Activated CD4-positive, alpha-beta memory T cell treated with anti-CD3 and anti-CD28 coated beads for 36 hours (primary cell): ENCODE measurements at regions of chrX and their contacts with region 1.

Region 1: GRCh38 chrX:39859991-39860861 is 237.5 kb downstream of the BCOR start:
- DNase-seq: peak; percentile 94
- H3K4me3 Mint-ChIP-seq: peak overlapping the region; percentile 29
- H3K27ac Mint-ChIP-seq: peak overlapping the region; percentile 98
- H3K4me1 Mint-ChIP-seq: peaks cover 55% of the 10 kb centered on the region
- H3K27me3 Mint-ChIP-seq: no peaks in the 10 kb centered on the region

Region 2: DNA sequence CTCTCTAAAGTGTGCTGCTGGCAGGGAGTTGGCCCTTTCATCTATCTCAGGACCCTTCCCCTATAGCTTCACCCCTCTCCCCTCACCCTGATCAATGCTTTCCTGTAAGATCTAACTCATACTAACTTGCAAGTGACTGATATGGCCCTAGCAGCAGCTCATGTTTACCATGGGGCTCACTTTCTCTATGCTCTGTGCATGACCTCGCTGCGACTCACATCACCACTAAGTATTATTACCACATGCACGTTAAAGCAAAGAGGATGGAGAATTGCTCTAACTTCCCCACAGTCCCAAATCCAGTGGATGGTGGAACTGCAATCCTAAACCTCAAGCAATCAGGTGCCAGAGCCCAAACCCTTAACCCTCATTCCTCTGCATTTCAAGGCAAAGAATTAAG is 432.3 kb before region 1 on chrX:
- CTCF ChIA-PET with region 1: no interaction called
- POLR2A ChIA-PET with region 1: no interaction called
- intact Hi-C with region 1: loop called (anchors 10 kb)
- DNase-seq: peak; percentile 78
- H3K4me3 Mint-ChIP-seq: no peak overlapping the region
- H3K27ac Mint-ChIP-seq: peak overlapping the region; percentile 90
- H3K4me1 Mint-ChIP-seq: peaks cover 56% of the 10 kb centered on the region
- H3K27me3 Mint-ChIP-seq: no peaks in the 10 kb centered on the region

Region 3: DNA sequence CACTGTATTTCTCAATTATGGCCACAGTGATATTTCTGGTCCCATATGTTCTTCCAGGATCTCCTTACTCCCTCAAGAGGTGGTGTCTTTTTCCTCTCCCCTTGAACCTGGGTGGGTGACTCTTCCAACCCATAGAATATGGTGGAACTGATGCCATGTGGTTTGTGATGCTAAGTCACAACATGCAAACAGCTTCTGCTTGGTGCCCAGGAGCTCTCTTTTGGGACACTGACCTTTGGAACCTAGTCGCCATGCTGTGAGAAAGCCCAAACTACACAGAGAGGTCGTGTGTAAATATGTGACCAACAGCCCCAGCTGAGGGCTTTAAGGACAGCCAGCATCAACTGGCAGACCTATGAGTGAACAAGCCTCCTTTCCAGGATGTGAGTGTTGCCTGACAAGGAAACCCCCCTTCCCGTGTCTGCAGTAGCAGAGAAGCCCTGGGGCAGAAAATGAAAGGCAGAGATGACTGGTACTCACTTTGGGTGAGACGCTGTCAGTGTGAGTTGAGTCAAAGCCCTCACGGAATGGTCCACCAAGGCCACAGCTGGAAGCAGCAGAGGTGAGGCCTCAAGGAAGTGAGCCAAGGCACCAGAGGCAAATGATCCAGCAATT is 14.1 kb after region 1 on chrX:
- CTCF ChIA-PET with region 1: interaction called, 6 read pairs
- POLR2A ChIA-PET with region 1: interaction called, 22 read pairs
- intact Hi-C with region 1: loop called (anchors 1 kb)
- DNase-seq: peak; percentile 88
- H3K4me3 Mint-ChIP-seq: no peak overlapping the region
- H3K27ac Mint-ChIP-seq: peak overlapping the region; percentile 93
- H3K4me1 Mint-ChIP-seq: peaks cover 51% of the 10 kb centered on the region
- H3K27me3 Mint-ChIP-seq: peaks cover 4% of the 10 kb centered on the region

Region 4: GRCh38 chrX:39896951-39897740 is 36.9 kb after region 1 on chrX:
- CTCF ChIA-PET with region 1: no interaction called
- POLR2A ChIA-PET with region 1: no interaction called
- intact Hi-C with region 1: loop called (anchors 5 kb)
- DNase-seq: no peak
- H3K4me3 Mint-ChIP-seq: no peak overlapping the region
- H3K27ac Mint-ChIP-seq: no peak overlapping the region
- H3K4me1 Mint-ChIP-seq: no peaks in the 10 kb centered on the region
- H3K27me3 Mint-ChIP-seq: peaks cover 2% of the 10 kb centered on the region

Region 5: GRCh38 chrX:39953883-39954282 is 93.7 kb after region 1 on chrX:
- CTCF ChIA-PET with region 1: no interaction called
- POLR2A ChIA-PET with region 1: no interaction called
- intact Hi-C with region 1: no loop called
- DNase-seq: no peak
- H3K4me3 Mint-ChIP-seq: no peak overlapping the region
- H3K27ac Mint-ChIP-seq: no peak overlapping the region
- H3K4me1 Mint-ChIP-seq: peaks cover 6% of the 10 kb centered on the region
- H3K27me3 Mint-ChIP-seq: no peaks in the 10 kb centered on the region

Region 6: DNA sequence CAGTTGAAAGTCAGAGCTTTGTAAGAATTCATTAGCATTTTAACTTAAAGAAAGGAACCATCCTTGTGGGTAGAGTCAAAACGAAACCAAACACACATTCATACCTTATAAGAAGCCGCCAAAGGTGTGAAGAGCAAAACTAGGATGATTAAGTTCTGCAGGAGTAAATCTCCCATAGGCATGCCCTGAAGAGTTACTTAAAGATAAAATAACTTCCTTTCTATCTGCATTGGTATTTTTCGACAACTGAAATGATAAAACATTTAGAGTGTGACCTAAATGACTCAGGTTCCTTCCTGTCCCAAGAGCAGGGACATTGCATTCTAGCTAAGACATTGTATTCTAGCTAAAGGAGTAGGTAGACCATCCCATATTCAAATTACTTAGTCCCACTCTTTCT is 162.2 kb after region 1 on chrX:
- CTCF ChIA-PET with region 1: interaction called, 4 read pairs
- POLR2A ChIA-PET with region 1: interaction called, 10 read pairs
- intact Hi-C with region 1: no loop called
- DNase-seq: no peak
- H3K4me3 Mint-ChIP-seq: no peak overlapping the region
- H3K27ac Mint-ChIP-seq: peak overlapping the region; percentile 51
- H3K4me1 Mint-ChIP-seq: peaks cover 13% of the 10 kb centered on the region
- H3K27me3 Mint-ChIP-seq: no peaks in the 10 kb centered on the region

Region 7: DNA sequence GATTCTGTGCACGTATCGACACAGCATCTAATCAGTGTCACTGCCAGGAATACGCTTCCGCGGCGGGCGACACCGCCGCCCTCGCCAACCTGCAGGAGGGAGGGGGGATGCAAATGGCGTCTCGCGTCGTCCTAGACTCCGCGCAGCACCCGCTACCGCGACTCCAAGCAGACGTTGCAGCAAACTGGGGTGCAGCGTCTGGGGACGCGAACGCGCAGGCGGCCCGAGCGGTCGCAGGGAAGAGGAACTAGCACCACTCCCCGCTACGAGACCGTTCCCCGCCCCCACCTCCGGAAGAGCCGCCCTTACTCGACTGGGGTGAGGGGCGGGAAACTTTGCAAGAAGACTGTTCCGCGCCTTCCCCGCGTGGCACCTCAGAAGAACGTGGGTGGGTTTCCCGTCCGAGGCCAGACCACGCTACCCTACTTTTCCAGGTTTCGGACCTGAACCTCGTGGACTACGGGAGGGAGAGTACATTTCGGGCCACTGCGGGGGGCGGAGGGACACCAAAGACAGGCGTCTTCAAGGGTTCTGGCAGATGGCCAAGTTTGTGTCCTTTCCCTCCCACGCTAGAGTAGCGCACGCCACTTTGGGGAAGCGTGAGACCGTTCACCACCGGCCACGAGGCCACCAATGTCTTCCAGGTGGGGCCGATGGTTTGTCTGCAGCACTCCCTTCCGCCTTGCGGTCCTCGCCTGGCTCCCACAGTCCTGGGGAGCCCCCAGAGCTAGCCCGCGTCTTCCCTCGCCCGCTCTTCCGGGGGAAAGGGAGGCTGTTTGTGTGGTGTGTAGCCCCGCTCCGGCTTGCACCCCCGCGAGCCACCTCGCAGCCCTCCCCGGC is 315.5 kb after region 1 on chrX:
- CTCF ChIA-PET with region 1: no interaction called
- POLR2A ChIA-PET with region 1: interaction called, 5 read pairs
- intact Hi-C with region 1: loop called (anchors 1 kb)
- DNase-seq: peak; percentile 81
- H3K4me3 Mint-ChIP-seq: peak overlapping the region; percentile 90
- H3K27ac Mint-ChIP-seq: peak overlapping the region; percentile 100
- H3K4me1 Mint-ChIP-seq: peaks cover 18% of the 10 kb centered on the region
- H3K27me3 Mint-ChIP-seq: no peaks in the 10 kb centered on the region